Adrenal gland (tissue), 19 donors: ENCODE measurements at regions of chr12 and their contacts with region 1.

Region 1: DNA sequence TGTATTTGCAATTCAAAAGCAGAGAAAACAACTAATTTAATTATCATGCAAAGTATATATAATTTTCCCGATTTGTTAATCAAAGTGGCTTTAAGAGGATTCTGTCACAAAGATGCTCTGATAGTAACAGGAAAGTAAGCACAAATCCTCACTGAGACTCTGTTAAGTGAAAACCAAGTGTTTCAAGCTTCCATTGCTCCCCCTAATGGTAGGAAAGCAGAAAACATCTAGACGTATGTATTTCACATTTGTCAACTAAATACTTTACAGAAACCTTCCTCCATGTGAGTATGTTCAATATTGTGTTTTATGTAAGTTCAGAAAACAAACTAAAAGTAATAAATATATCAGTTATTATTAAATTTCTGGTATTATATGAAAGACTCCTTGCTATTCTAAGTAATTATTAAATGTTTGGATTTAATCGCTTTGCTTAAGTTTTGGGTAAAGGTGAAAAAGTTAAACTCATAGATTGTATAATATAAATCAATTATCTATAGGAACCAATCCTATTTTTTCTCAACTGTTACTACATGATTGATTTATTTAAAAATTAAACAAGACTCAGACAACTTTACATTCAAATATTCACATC is 1.5 kb upstream of the NTS start:
- DNase-seq: no peak
- H3K4me3 ChIP-seq: no peak overlapping the region
- H3K27ac ChIP-seq: no peak overlapping the region
- H3K4me1 ChIP-seq: no peaks in the 10 kb centered on the region
- H3K27me3 ChIP-seq: peaks cover 3% of the 10 kb centered on the region
- CTCF ChIP-seq: peak; percentile 47 to 73 (median 54)
- POLR2A ChIP-seq: no peak

Region 2: GRCh38 chr12:85468356-85469157 is 404.0 kb before region 1 on chr12:
- intact Hi-C with region 1: loop called (anchors 5 to 10 kb)
- DNase-seq: peak in 6 of 7 donors; percentile 23 to 66 (median 50)
- H3K4me3 ChIP-seq: peak overlapping the region in 2 of 4 donors; percentile 5 to 52
- H3K27ac ChIP-seq: no peak overlapping the region
- H3K4me1 ChIP-seq: no peaks in the 10 kb centered on the region
- H3K27me3 ChIP-seq: peaks cover 7% of the 10 kb centered on the region
- CTCF ChIP-seq: peak; percentile 67 to 79 (median 76)
- POLR2A ChIP-seq: no peak

Region 3: DNA sequence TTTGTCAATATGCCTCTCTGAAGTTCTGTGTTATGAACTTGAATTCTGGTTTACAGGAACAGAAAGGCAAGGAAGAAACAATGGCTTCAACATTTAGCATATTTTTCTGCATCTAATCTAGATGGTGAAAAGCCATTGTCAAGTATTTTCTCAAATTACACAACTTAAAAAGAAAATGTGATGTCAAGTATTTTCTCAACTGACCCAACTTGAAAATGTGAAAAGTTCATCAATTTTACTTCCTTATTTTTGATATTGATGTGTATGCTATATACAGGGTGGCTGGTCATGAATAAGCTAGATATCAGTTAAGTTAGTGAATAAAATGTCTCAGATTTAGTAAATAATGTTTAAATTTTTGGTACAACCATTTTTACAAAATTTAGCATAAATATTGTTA is 395.8 kb before region 1 on chr12:
- intact Hi-C with region 1: loop called (anchors 5 to 10 kb)
- DNase-seq: no peak
- H3K4me3 ChIP-seq: no peak overlapping the region
- H3K27ac ChIP-seq: no peak overlapping the region
- H3K4me1 ChIP-seq: no peaks in the 10 kb centered on the region
- H3K27me3 ChIP-seq: peaks cover 5% of the 10 kb centered on the region
- CTCF ChIP-seq: no peak
- POLR2A ChIP-seq: no peak

Region 4: DNA sequence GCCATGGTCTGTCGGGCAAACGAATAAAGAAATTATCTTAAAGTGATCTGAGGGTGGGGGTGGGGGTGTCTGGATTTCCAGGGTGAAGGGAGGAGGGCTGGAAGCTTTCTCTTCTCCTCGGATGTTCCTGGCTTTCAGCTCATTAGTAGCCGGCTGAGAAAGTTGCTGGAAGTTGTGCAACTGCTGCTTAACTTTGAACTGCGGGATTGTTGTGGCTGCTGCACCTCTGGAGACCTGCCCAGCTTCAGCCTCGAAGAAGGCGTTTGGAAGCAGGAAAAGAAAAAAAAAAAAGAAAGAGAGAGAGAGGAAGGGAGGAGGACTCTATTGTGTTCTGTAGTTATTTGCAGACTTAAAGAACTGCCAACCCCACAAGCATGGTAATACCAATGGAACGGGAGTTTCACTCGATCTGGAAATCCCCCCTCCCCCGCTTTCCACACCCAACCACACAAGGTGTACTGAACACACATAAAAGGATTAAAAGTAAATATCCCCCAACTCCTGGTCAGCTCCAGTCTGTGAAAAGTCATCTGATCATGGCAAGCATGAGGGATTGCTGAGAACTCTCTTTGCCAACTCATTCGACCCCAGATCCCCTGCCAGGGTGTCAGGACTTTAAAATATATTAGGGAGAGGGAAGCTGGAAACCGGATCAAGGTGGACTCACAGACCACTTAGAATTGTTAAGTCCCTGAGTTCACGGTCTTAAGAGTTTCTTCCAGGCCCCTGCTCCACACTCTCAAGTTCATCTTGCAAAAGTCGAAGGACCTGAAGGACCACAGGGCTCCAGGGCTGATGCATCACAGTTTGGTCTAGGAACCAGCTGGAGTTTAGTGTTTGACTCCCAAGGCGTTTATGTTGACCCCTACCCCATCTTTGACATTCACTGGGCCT is 36.1 kb before region 1 on chr12 and contains the start of gene RASSF9:
- intact Hi-C with region 1: no loop called
- DNase-seq: peak in 6 of 7 donors; percentile 47 to 76 (median 58)
- H3K4me3 ChIP-seq: peak within 1 kb of the TSS in 2 of 4 donors; percentile 13 to 52
- H3K27ac ChIP-seq: peak within 1 kb of the TSS in 3 of 5 donors; percentile 1 to 57 (median 27)
- H3K4me1 ChIP-seq: no peaks in the 10 kb centered on the region
- H3K27me3 ChIP-seq: no peaks in the 10 kb centered on the region
- CTCF ChIP-seq: no peak
- POLR2A ChIP-seq: no peak
- total RNA-seq, gene RASSF9: 0.50 to 4.3 (median 1.5) TPM

Region 5: DNA sequence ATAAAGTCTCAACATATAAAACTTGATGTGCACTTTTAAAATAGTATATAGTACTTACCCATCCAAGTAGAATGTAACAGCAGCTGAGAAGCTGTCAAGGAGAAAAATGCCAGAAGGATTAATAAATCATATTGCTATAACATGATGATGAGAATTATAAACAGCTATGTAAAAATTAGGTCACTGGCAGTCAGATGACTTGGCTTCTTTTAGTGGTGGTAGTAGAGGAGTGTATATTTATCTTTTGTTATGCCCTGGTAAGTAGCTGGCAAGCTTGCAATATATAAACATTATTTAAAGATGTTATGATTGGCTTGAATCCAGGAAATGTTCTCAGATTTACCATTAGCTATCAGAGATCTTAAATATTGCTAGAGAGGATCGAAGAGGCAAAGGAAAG is 854.6 kb after region 1 on chr12:
- intact Hi-C with region 1: no loop called
- DNase-seq: no peak
- H3K4me3 ChIP-seq: no peak overlapping the region
- H3K27ac ChIP-seq: no peak overlapping the region
- H3K4me1 ChIP-seq: no peaks in the 10 kb centered on the region
- H3K27me3 ChIP-seq: no peaks in the 10 kb centered on the region
- CTCF ChIP-seq: no peak
- POLR2A ChIP-seq: no peak